Activated T-helper 2 cell treated with anti-CD3 and anti-CD28 coated beads, Interferon-gamma antibody, Interleukin-2, Interleukin-4, amounts not matched to agents 10 μg/mL and 5 μg/mL and 100 μg/mL, durations not matched to agents 14 hours and 24 hours and 36 hours (primary cell): ENCODE measurements at regions of chr2 and their contacts with region 1.

Region 1: DNA sequence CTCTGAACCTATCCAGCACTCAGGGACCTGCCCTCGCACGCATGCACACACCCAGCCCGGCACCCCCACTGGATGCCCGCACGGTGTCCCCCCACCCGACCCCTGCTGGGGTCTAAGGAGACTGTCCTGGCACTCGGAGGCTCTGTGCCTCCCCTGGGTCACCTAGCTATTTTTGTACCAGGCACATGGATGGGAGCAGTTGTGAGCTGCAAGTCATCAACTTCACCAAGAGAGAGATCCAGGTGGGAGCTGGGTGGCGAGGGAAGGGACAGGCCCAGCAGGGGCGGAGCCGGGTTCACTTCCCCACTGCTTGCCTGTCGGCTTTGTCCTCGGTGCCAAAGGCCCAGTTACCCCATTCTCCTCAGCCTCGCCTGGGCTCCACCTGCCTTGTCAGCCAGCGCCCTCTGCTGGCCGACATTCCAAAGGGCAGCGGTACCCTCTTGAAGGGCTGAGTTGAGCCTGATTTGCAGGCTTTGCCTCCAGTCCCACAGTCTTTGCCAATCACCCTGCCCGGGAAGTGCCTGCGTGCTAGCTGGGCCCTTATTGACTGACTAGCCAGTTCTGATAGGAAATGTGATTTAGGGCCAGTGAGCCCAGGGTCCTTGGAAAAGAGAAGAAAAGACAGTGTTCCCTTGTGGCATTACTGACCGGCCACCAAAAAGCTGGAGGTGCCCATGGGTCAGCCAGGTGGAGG is 5.8 kb downstream of the NT5DC4 start:
- DNase-seq: peak; percentile 83
- H3K4me3 Mint-ChIP-seq: no peak overlapping the region
- H3K27ac Mint-ChIP-seq: no peak overlapping the region
- H3K4me1 Mint-ChIP-seq: peaks cover 32% of the 10 kb centered on the region
- H3K27me3 Mint-ChIP-seq: peaks cover 2% of the 10 kb centered on the region

Region 2: DNA sequence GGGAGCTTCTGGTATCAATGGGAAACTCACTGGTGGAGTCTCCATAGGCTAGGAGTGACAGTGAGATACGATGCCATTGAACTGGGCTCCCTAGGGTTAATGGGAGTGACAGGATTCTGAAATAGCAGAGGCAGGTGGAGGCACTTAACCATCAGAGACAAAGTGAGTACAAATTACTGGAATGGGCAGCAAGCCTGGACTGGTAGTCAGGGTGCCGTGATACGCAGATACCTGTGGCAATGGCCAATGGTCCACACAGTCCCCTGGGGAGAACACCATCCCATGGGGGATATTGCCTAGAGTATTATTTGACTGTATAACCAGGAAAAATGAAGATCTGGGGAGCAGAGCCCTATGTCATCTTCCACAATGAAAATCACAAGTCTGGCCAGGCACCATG is 124.9 kb before region 1 on chr2:
- intact Hi-C with region 1: loop called (anchors 1 kb)
- DNase-seq: no peak
- H3K4me3 Mint-ChIP-seq: no peak overlapping the region
- H3K27ac Mint-ChIP-seq: no peak overlapping the region
- H3K4me1 Mint-ChIP-seq: peaks cover 5% of the 10 kb centered on the region
- H3K27me3 Mint-ChIP-seq: no peaks in the 10 kb centered on the region

Region 3: DNA sequence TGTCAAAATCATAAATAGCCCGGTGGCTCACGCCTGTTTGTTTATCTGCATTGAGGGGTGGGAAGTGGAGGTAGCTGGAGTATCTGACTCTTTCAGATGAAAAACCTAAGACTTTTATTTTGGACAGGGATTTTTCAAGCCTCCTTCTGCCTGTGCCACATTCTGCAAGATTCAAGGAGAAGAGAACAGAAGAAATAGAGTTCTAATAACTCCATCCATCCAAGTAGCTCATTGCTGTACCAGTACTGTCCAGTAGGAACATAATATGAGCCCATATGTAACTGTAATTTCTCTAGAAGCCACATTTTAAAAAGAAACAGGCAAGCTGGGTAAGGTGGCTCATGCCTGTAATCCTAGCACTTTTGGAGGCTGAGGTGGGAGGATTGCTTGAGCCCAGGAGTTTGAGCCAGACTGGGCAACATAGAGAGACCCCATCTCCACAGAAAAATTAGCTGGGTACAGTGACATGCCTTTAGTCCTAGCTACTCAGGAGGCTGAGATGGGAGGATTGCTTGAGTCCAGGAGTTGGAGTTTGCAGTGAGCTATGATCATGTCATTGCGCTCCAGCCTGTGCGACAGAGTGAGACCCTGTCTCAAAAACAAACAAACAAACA is 41.3 kb before region 1 on chr2:
- intact Hi-C with region 1: no loop called
- DNase-seq: no peak
- H3K4me3 Mint-ChIP-seq: no peak overlapping the region
- H3K27ac Mint-ChIP-seq: no peak overlapping the region
- H3K4me1 Mint-ChIP-seq: peaks cover 24% of the 10 kb centered on the region
- H3K27me3 Mint-ChIP-seq: no peaks in the 10 kb centered on the region